WTC11 (cell line): ENCODE measurements at regions of chr16 and their contacts with region 1.

Region 1: GRCh38 chr16:85253084-85253941 is 141.0 kb upstream of the CIBAR2 start:
- DNase-seq: peak; percentile 87
- ATAC-seq: peak; percentile 91
- H3K4me3 Mint-ChIP-seq: no peak overlapping the region
- H3K27ac Mint-ChIP-seq: no peak overlapping the region
- H3K4me1 Mint-ChIP-seq: no peaks in the 10 kb centered on the region
- H3K27me3 Mint-ChIP-seq: no peaks in the 10 kb centered on the region; the same call in 1 of the 2 replicates
- CTCF ChIP-seq: peak; percentile 99

Region 2: DNA sequence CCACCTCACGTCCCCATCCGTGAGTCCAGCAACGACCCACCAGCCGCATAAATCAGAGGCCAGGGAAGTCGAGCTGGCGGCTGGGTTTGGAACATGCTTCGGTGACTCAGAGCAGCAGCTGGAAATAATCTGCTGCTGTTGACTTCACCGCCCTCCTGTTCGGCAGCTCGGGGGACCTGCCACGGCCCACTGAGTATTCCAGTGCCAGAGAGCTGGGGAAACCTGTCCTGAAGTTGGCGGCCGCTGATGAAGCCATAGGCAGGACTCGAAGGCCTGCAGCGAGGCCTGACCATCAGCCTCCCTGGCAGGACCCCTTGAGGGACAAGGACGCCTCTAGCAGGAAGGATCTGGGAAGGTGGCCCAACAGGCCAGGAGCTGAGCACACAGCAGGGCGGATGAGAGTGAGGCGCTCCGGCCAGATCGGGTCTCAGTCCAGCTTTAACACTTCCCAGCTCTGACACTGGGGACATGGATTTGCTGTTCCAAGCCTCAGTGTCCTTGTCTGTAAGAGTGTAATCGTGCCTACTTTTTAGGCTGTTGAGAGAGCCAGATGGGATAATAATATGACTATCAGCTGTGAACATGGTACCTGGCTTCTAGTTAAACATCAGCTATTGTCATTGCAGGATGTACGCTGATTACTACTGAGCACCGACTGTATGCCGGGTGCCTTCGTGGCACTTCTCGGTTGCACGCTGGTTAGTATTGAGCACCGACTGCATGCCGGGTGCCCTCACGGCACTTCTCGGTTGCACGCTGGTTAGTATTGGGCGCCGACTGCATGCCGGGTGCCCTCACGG is 90.6 kb before region 1 on chr16:
- CTCF ChIA-PET with region 1: interaction called, 15 read pairs
- POLR2A ChIA-PET with region 1: interaction called, 3 read pairs
- DNase-seq: no peak
- ATAC-seq: no peak
- H3K4me3 Mint-ChIP-seq: no peak overlapping the region
- H3K27ac Mint-ChIP-seq: no peak overlapping the region
- H3K4me1 Mint-ChIP-seq: peaks cover 36% of the 10 kb centered on the region
- H3K27me3 Mint-ChIP-seq: no peaks in the 10 kb centered on the region; the same call in 1 of the 2 replicates
- CTCF ChIP-seq: no peak

Region 3: GRCh38 chr16:85227084-85227945 is 26.0 kb before region 1 on chr16:
- CTCF ChIA-PET with region 1: interaction called, 10 read pairs
- POLR2A ChIA-PET with region 1: no interaction called
- DNase-seq: no peak
- ATAC-seq: peak; percentile 27
- H3K4me3 Mint-ChIP-seq: no peak overlapping the region
- H3K27ac Mint-ChIP-seq: peak overlapping the region; percentile 71
- H3K4me1 Mint-ChIP-seq: peaks cover 24% of the 10 kb centered on the region
- H3K27me3 Mint-ChIP-seq: no peaks in the 10 kb centered on the region; the same call in 1 of the 2 replicates
- CTCF ChIP-seq: no peak

Region 4: DNA sequence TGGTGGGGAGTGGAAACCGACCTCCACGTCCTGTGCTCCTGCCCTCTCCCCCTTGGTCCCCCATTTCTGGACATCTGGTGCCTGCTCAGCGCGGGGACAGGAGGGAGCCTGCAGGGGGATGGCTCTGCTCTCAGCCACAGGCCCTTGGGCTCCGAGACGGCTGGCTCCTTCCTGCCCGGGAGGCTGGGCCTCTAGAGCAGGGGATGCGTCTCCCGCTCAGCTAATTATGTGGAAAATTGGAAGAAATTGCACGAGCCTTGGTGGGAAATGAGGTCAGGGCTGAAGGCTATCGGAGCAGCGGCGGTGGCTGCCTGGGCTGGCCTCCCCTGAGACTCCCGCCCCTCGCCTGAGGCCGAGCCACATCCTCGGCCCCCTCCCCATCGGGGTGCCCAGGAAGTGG is 13.5 kb after region 1 on chr16:
- CTCF ChIA-PET with region 1: interaction called, 39 read pairs
- POLR2A ChIA-PET with region 1: no interaction called
- DNase-seq: no peak
- ATAC-seq: no peak
- H3K4me3 Mint-ChIP-seq: no peak overlapping the region
- H3K27ac Mint-ChIP-seq: no peak overlapping the region
- H3K4me1 Mint-ChIP-seq: no peaks in the 10 kb centered on the region; the same call in 1 of the 2 replicates
- H3K27me3 Mint-ChIP-seq: no peaks in the 10 kb centered on the region
- CTCF ChIP-seq: no peak

Region 5: GRCh38 chr16:85291302-85292148 is 38.2 kb after region 1 on chr16:
- CTCF ChIA-PET with region 1: interaction called, 14 read pairs
- POLR2A ChIA-PET with region 1: no interaction called
- DNase-seq: no peak
- ATAC-seq: peak; percentile 27; the same call in 1 of the 2 replicates
- H3K4me3 Mint-ChIP-seq: no peak overlapping the region
- H3K27ac Mint-ChIP-seq: no peak overlapping the region
- H3K4me1 Mint-ChIP-seq: no peaks in the 10 kb centered on the region
- H3K27me3 Mint-ChIP-seq: no peaks in the 10 kb centered on the region
- CTCF ChIP-seq: no peak

Region 6: GRCh38 chr16:85369741-85370528 is 116.6 kb after region 1 on chr16:
- CTCF ChIA-PET with region 1: interaction called, 10 read pairs
- POLR2A ChIA-PET with region 1: no interaction called
- DNase-seq: peak; percentile 84
- ATAC-seq: peak; percentile 73
- H3K4me3 Mint-ChIP-seq: no peak overlapping the region
- H3K27ac Mint-ChIP-seq: no peak overlapping the region
- H3K4me1 Mint-ChIP-seq: peaks cover 21% of the 10 kb centered on the region
- H3K27me3 Mint-ChIP-seq: peaks cover 9% of the 10 kb centered on the region
- CTCF ChIP-seq: peak; percentile 85